ENCODE measurements at regions of chr13 and their contacts with region 1.

Region 1: DNA sequence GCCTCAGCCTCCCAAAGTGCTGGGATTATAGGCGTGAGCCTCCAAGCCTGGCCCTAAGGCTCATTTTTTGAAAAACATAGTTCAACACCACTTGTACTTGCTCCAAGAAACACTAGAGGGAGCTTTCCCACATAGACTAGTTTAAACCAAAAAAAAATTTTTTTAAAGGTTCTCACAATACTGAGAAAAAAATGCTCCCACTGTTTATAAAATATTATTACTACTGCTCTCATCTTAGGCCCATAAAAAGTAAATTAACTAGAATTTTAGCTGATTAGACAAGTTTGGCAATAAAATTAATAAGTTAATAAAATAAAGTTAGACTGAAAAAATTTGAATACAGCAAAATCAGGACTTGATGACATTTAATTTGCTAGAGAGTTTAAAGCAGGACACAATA is 109.5 kb downstream of the TBC1D4 start:
- DNase-seq: no peak
- ATAC-seq: peak; percentile 44 to 61 (median 47)
- H3K4me3 ChIP-seq: peak overlapping the region; percentile 4
- H3K27ac ChIP-seq: peak overlapping the region; percentile 93
- H3K4me1 ChIP-seq: peaks cover 81% of the 10 kb centered on the region
- H3K27me3 ChIP-seq: no peaks in the 10 kb centered on the region
- CTCF ChIP-seq: peak; percentile 78

Region 2: DNA sequence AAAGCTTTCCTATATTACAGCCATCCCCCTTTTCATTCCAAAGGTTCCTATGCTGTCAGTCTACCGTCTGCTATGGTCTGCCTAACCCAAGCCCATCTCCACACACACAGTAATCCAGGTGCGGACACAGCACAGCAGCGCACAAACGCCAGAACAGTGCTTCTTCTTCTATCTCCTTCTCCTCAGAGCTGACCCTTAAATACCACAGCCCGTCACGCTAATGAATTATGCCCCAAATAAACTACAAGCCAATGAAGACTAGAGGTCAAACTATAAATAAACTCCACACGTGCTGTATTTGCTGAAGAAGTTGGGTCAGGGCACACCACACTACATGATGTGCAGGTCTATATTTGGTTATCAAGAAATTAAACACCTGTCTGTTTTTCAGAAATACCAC is 37.7 kb after region 1 on chr13:
- intact Hi-C with region 1: loop called in 1 of 2 experiments (anchors 5 kb)
- DNase-seq: peak in 1 of 2 donors; percentile 61
- ATAC-seq: peak; percentile 90 to 94 (median 92)
- H3K4me3 ChIP-seq: peak overlapping the region; percentile 48
- H3K27ac ChIP-seq: peak overlapping the region; percentile 83
- H3K4me1 ChIP-seq: peaks cover 37% of the 10 kb centered on the region
- H3K27me3 ChIP-seq: no peaks in the 10 kb centered on the region
- CTCF ChIP-seq: no peak

Region 3: GRCh38 chr13:75549262-75550158 is 177.0 kb after region 1 on chr13 and contains the start of gene UCHL3:
- intact Hi-C with region 1: loop called in 1 of 2 experiments (anchors 10 kb)
- DNase-seq: peak; percentile 97 to 99
- ATAC-seq: peak; percentile 97
- H3K4me3 ChIP-seq: peak within 1 kb of the TSS; percentile 85
- H3K27ac ChIP-seq: peak within 1 kb of the TSS; percentile 92
- H3K4me1 ChIP-seq: peaks cover 14% of the 10 kb centered on the region
- H3K27me3 ChIP-seq: no peaks in the 10 kb centered on the region
- CTCF ChIP-seq: peak; percentile 87
- total RNA-seq, gene UCHL3: 33.8 to 52.3 (median 40.2) TPM

Measured in psoas muscle (tissue), 8 donors.